OCI-LY7 (cell line): ENCODE measurements at regions of chr1 and their contacts with region 1.

Region 1: GRCh38 chr1:160291248-160292220 is 6.6 kb upstream of the PEX19 start:
- DNase-seq: peak; percentile 75
- H3K4me3 ChIP-seq: no peak overlapping the region
- H3K27ac ChIP-seq: no peak overlapping the region
- H3K4me1 ChIP-seq: no peaks in the 10 kb centered on the region
- CTCF ChIP-seq: peak; percentile 92

Region 2: GRCh38 chr1:160376525-160377131 is 85.1 kb after region 1 on chr1:
- CTCF ChIA-PET with region 1: interaction called, 8 read pairs
- POLR2A ChIA-PET with region 1: no interaction called
- intact Hi-C with region 1: loop called (anchors 1 kb)
- DNase-seq: peak; percentile 81
- H3K4me3 ChIP-seq: no peak overlapping the region
- H3K27ac ChIP-seq: peak overlapping the region; percentile 44
- H3K4me1 ChIP-seq: peaks cover 21% of the 10 kb centered on the region
- CTCF ChIP-seq: peak; percentile 99